CD14-positive monocyte (primary cell): ENCODE measurements at regions of chr2 and their contacts with region 1.

Region 1: DNA sequence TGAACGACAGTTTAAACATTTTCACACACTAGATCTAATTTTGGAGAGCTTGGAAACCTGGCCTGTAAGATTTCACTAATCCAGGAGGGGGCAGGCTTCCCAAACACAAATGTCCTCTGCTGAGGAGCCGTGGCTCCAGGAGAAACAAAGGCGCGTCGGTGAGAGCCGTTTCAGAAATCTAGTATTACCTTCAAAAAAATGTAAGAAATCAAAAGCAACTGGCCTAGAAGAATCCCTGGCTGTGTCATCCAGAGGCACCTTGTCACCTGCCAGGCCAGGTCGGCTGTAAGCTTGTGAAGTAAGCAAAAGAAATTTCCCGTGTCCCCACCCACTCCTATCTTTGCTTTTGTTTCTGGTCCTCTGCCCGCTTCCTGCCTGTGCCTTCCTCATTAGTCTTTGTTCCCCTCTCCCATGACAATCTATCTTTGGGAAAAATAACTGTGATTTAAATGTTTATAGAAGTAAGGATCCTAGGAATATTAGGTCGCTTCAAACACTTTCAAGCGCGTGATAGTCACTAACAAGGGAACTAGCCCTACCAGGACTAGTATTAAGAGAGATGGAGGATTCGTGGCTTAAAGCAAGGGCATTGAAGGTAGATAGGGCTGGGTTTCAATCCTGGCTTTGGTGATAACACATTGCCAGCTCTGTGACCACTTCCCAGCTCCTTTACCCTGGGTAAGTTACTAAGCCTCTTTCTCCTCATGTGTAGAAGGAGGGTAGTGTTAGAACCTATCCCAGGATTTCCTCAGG is 99.5 kb upstream of the STK39 start:
- DNase-seq: peak; percentile 46 to 65 (median 64)
- H3K4me3 ChIP-seq: peak overlapping the region; percentile 48 to 86 (median 73)
- H3K4me3 Mint-ChIP-seq: peak overlapping the region; percentile 88 to 93
- H3K27ac ChIP-seq: peak overlapping the region in 1 of 2 donors; percentile 68
- H3K27ac Mint-ChIP-seq: peak overlapping the region in 5 of 7 donors; percentile 51 to 90 (median 77)
- H3K4me1 ChIP-seq: peaks cover 8 to 13% of the 10 kb centered on the region in 2 donors
- H3K4me1 Mint-ChIP-seq: peaks cover 24% of the 10 kb centered on the region
- H3K27me3 ChIP-seq: no peaks in the 10 kb centered on the region
- H3K27me3 Mint-ChIP-seq: peaks cover 0 to 6% (median 1%) of the 10 kb centered on the region in 3 donors
- CTCF ChIP-seq: peak; percentile 80

Region 2: GRCh38 chr2:168136392-168136977 is 210.4 kb before region 1 on chr2:
- intact Hi-C with region 1: loop called in 1 of 2 experiments (anchors 10 kb)
- DNase-seq: peak in 2 of 3 donors; percentile 32 to 53
- H3K4me3 ChIP-seq: no peak overlapping the region
- H3K4me3 Mint-ChIP-seq: no peak overlapping the region
- H3K27ac ChIP-seq: no peak overlapping the region
- H3K27ac Mint-ChIP-seq: no peak overlapping the region
- H3K4me1 ChIP-seq: no peaks in the 10 kb centered on the region
- H3K4me1 Mint-ChIP-seq: peaks cover 4% of the 10 kb centered on the region
- H3K27me3 ChIP-seq: no peaks in the 10 kb centered on the region
- H3K27me3 Mint-ChIP-seq: no peaks in the 10 kb centered on the region
- CTCF ChIP-seq: peak; percentile 81

Region 3: GRCh38 chr2:168300460-168300859 is 46.4 kb before region 1 on chr2:
- intact Hi-C with region 1: no loop called
- DNase-seq: no peak
- H3K4me3 ChIP-seq: no peak overlapping the region
- H3K4me3 Mint-ChIP-seq: no peak overlapping the region
- H3K27ac ChIP-seq: no peak overlapping the region
- H3K27ac Mint-ChIP-seq: no peak overlapping the region
- H3K4me1 ChIP-seq: no peaks in the 10 kb centered on the region
- H3K4me1 Mint-ChIP-seq: no peaks in the 10 kb centered on the region
- H3K27me3 ChIP-seq: no peaks in the 10 kb centered on the region
- H3K27me3 Mint-ChIP-seq: peaks cover 0 to 2% (median 2%) of the 10 kb centered on the region in 3 donors
- CTCF ChIP-seq: no peak

Region 4: GRCh38 chr2:168766600-168766999 is 419.7 kb after region 1 on chr2:
- intact Hi-C with region 1: loop called in 1 of 2 experiments (anchors 5 kb)
- DNase-seq: no peak
- H3K4me3 ChIP-seq: no peak overlapping the region
- H3K4me3 Mint-ChIP-seq: no peak overlapping the region
- H3K27ac ChIP-seq: peak overlapping the region in 1 of 2 donors; percentile 3
- H3K27ac Mint-ChIP-seq: peak overlapping the region in 3 of 7 donors; percentile 21 to 58 (median 58)
- H3K4me1 ChIP-seq: peaks cover 0 to 5% of the 10 kb centered on the region in 2 donors
- H3K4me1 Mint-ChIP-seq: peaks cover 11% of the 10 kb centered on the region
- H3K27me3 ChIP-seq: no peaks in the 10 kb centered on the region
- H3K27me3 Mint-ChIP-seq: peaks cover 0 to 2% (median 0%) of the 10 kb centered on the region in 3 donors
- CTCF ChIP-seq: no peak

Region 5: DNA sequence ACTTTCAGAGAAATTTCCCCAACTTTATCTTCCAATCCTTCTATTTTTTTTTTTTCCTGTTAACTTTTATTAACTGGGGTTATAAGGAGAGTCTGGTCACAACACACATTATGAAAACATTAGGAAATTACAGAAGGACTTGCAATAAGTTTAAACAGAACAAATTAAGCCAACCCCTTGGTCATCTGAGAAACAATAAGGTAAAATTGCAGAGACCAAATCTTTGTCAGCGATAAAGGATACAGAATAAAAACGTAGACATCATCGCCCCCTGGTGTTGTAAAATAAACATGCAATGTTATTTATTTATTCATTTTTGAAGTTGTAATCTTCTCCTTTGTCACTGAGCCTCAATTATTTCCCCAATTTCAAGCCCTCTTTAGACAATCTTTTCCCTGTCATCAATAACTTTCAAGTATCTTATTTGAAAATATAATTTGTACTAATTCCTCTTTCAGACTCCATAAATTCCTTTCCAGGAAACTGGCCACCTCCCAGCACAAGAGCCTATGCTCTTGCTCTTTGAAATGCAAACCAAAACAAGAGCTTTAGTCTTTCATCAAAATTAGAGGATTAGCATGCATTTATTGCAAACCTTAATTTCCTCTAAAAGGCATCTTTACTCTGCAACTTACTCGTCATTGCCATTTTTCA is 573.7 kb after region 1 on chr2:
- intact Hi-C with region 1: loop called (anchors 2 to 5 kb)
- DNase-seq: peak; percentile 11 to 48 (median 23)
- H3K4me3 ChIP-seq: no peak overlapping the region
- H3K4me3 Mint-ChIP-seq: no peak overlapping the region
- H3K27ac ChIP-seq: no peak overlapping the region
- H3K27ac Mint-ChIP-seq: no peak overlapping the region
- H3K4me1 ChIP-seq: no peaks in the 10 kb centered on the region
- H3K4me1 Mint-ChIP-seq: no peaks in the 10 kb centered on the region
- H3K27me3 ChIP-seq: no peaks in the 10 kb centered on the region
- H3K27me3 Mint-ChIP-seq: peaks cover 0 to 3% (median 1%) of the 10 kb centered on the region in 3 donors
- CTCF ChIP-seq: peak; percentile 85